Endothelial cell of umbilical vein (primary cell): ENCODE measurements at regions of chr17 and their contacts with region 1.

Region 1: DNA sequence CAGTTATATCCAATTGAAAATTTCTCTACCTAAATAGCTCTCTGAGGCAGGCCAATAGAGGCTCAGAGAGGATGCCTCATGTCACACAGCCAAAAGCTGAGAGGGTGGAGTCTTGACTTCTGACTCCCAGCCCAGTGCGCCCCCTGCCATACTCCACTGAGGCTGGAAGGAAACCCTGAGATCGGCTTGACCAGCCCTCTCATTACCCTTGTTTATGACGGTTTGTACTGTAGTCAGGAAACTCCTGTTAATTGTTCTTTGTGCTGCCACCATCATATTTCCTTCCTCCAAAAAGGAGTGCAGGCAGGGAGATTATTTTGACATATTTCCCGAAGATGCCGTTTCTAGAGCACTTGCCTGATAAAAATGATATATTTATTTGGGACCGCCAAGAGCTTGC is 107.9 kb downstream of the AIPL1 start:
- DNase-seq: peak; percentile 98
- H3K4me3 ChIP-seq: no peak overlapping the region
- H3K27ac ChIP-seq: peak overlapping the region; percentile 73
- H3K4me1 ChIP-seq: peaks cover 13% of the 10 kb centered on the region
- H3K27me3 ChIP-seq: peaks cover 0 to 3% of the 10 kb centered on the region in 2 experiments
- CTCF ChIP-seq: peak; percentile 21 to 58
- POLR2A ChIP-seq: no peak

Region 2: GRCh38 chr17:5832886-5833285 is 494.1 kb before region 1 on chr17:
- CTCF ChIA-PET with region 1: no interaction called
- POLR2A ChIA-PET with region 1: no interaction called
- dilution Hi-C with region 1: no loop called
- intact Hi-C with region 1: loop called (anchors 1 kb)
- DNase-seq: peak; percentile 87
- H3K4me3 ChIP-seq: no peak overlapping the region
- H3K27ac ChIP-seq: peak overlapping the region; percentile 95
- H3K4me1 ChIP-seq: peaks cover 49% of the 10 kb centered on the region
- H3K27me3 ChIP-seq: no peaks in the 10 kb centered on the region
- CTCF ChIP-seq: no peak
- POLR2A ChIP-seq: no peak

Region 3: GRCh38 chr17:6098050-6098822 is 228.8 kb before region 1 on chr17:
- CTCF ChIA-PET with region 1: interaction called, 3 read pairs
- POLR2A ChIA-PET with region 1: no interaction called
- dilution Hi-C with region 1: no loop called
- intact Hi-C with region 1: loop called (anchors 1 kb)
- DNase-seq: peak; percentile 98
- H3K4me3 ChIP-seq: no peak overlapping the region
- H3K27ac ChIP-seq: peak overlapping the region; percentile 91
- H3K4me1 ChIP-seq: peaks cover 40% of the 10 kb centered on the region
- H3K27me3 ChIP-seq: no peaks in the 10 kb centered on the region
- CTCF ChIP-seq: no peak
- POLR2A ChIP-seq: no peak

Region 4: GRCh38 chr17:6191405-6192324 is 135.3 kb before region 1 on chr17:
- CTCF ChIA-PET with region 1: interaction called, 7 read pairs
- POLR2A ChIA-PET with region 1: interaction called, 7 read pairs
- dilution Hi-C with region 1: no loop called
- intact Hi-C with region 1: loop called (anchors 1 kb)
- DNase-seq: peak; percentile 94
- H3K4me3 ChIP-seq: no peak overlapping the region
- H3K27ac ChIP-seq: peak overlapping the region; percentile 92
- H3K4me1 ChIP-seq: peaks cover 24% of the 10 kb centered on the region
- H3K27me3 ChIP-seq: no peaks in the 10 kb centered on the region
- CTCF ChIP-seq: no peak
- POLR2A ChIP-seq: peak; percentile 37

Region 5: DNA sequence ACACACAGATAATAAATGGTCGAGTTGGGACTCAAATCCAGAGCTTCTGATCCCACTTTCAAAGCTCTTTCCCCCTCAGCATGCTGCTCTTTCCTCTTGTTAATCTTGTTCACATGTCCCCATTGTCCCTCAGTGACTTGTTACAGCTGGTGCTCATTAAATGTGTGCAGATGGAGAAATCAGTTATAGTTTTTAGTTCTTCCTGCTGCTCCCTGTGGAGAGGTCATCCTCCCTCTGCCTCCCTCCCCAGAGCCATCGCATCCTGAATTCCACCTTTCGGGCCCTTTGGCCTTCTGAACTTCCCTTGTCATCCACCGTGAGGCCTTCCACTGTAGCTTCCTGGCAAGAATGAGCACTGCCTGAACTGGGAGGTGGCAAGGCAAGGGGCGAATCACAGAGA is 77.3 kb before region 1 on chr17:
- CTCF ChIA-PET with region 1: no interaction called
- POLR2A ChIA-PET with region 1: no interaction called
- dilution Hi-C with region 1: no loop called
- intact Hi-C with region 1: no loop called
- DNase-seq: no peak
- H3K4me3 ChIP-seq: no peak overlapping the region
- H3K27ac ChIP-seq: no peak overlapping the region
- H3K4me1 ChIP-seq: peaks cover 12% of the 10 kb centered on the region
- H3K27me3 ChIP-seq: no peaks in the 10 kb centered on the region
- CTCF ChIP-seq: no peak
- POLR2A ChIP-seq: no peak

Region 6: GRCh38 chr17:6413065-6413464 is 86.1 kb after region 1 on chr17:
- CTCF ChIA-PET with region 1: no interaction called
- POLR2A ChIA-PET with region 1: no interaction called
- dilution Hi-C with region 1: no loop called
- intact Hi-C with region 1: loop called (anchors 1 kb)
- DNase-seq: peak; percentile 67
- H3K4me3 ChIP-seq: no peak overlapping the region
- H3K27ac ChIP-seq: no peak overlapping the region
- H3K4me1 ChIP-seq: no peaks in the 10 kb centered on the region
- H3K27me3 ChIP-seq: no peaks in the 10 kb centered on the region
- CTCF ChIP-seq: peak; percentile 50 to 56
- POLR2A ChIP-seq: no peak

Region 7: DNA sequence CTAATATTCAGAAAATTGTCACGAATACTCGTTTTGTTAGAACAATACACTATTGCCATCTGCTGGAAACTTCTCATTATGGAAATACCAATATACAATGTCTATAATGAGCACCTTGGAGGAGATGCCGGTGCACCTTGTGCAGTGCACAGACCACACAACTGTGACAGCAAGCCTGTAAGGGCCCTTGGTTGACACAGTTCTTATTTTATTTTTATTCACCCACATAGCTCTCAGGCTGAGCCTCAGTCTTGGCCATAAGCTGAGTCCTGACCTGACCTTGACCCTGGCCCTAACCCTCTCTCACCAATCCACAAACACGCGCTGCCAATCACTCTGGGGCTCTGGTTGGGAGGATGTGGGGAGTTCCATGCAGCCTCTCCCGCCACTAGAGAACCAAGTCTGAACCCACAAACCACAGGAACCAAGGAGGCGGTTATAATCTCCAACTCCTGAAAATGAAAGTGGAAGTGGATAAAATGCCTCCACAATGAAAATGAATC is 100.3 kb after region 1 on chr17:
- CTCF ChIA-PET with region 1: no interaction called
- POLR2A ChIA-PET with region 1: no interaction called
- dilution Hi-C with region 1: no loop called
- intact Hi-C with region 1: no loop called
- DNase-seq: no peak
- H3K4me3 ChIP-seq: no peak overlapping the region
- H3K27ac ChIP-seq: no peak overlapping the region
- H3K4me1 ChIP-seq: no peaks in the 10 kb centered on the region
- H3K27me3 ChIP-seq: no peaks in the 10 kb centered on the region
- CTCF ChIP-seq: no peak
- POLR2A ChIP-seq: no peak

Region 8: GRCh38 chr17:6443692-6444569 is 116.9 kb after region 1 on chr17 and contains the start of gene PIMREG:
- CTCF ChIA-PET with region 1: no interaction called
- POLR2A ChIA-PET with region 1: no interaction called
- dilution Hi-C with region 1: no loop called
- intact Hi-C with region 1: no loop called
- DNase-seq: peak; percentile 92
- H3K4me3 ChIP-seq: peak within 1 kb of the TSS; percentile 51 to 85 (median 70)
- H3K27ac ChIP-seq: peak within 1 kb of the TSS; percentile 50
- H3K4me1 ChIP-seq: peaks cover 17% of the 10 kb centered on the region
- H3K27me3 ChIP-seq: peaks cover 4 to 13% of the 10 kb centered on the region in 2 experiments
- CTCF ChIP-seq: no peak
- POLR2A ChIP-seq: peak; percentile 28
- total RNA-seq, gene PIMREG: 35.3 and 37.7 TPM in 2 replicates

Region 9: GRCh38 chr17:6507535-6507934 is 180.5 kb after region 1 on chr17:
- CTCF ChIA-PET with region 1: no interaction called
- POLR2A ChIA-PET with region 1: no interaction called
- dilution Hi-C with region 1: no loop called
- intact Hi-C with region 1: no loop called
- DNase-seq: peak; percentile 92
- H3K4me3 ChIP-seq: no peak overlapping the region
- H3K27ac ChIP-seq: no peak overlapping the region
- H3K4me1 ChIP-seq: peaks cover 53% of the 10 kb centered on the region
- H3K27me3 ChIP-seq: no peaks in the 10 kb centered on the region
- CTCF ChIP-seq: no peak
- POLR2A ChIP-seq: no peak